Mammary epithelial cell (primary cell): ENCODE measurements at regions of chr15 and their contacts with region 1.

Region 1: DNA sequence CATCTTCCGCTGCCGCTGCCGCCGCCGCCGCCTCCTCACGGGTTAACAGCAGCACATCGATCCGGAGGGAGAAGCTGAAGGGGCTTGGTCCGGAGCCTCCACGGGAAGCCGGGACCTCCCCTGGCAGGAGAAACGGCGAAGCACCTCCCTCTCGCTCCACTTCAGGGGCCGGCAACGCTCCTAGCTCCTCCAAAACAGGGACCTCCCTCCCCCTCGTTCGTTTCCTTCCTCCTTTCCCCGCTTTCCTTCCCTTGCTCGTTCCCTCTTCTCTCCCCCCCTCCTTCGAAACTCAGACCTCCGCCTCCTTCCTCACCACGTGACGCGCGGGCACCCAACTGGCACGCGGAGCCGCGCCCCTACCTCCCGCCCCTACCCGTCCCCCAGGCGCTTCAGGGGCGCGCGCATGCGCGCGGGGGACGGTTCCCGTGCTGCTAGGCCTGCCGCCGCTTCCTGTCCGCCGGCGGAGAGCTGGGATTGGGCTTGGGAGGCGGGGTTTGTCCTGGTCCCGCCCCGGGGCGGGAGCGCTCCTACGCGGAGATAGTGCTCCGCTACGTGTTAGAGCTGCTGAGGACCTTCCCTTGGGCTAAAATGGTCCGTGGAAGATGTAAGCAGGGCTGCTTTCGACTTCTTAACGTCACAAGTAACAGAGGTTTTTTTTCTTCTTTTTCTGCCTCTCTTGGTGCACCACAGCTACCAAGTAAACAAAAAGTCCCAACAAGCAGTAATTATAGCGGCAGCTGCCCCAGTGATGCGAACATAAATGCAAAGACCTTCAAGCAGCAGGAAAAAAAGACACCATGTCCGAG is at the start of gene ADAM10:
- DNase-seq: peak; percentile 100
- H3K4me3 ChIP-seq: peak within 1 kb of the TSS; percentile 77 to 96 (median 90)
- H3K27ac ChIP-seq: peak within 1 kb of the TSS; percentile 89
- H3K4me1 ChIP-seq: peaks cover 10% of the 10 kb centered on the region
- H3K27me3 ChIP-seq: no peaks in the 10 kb centered on the region
- CTCF ChIP-seq: no peak
- total RNA-seq, gene ADAM10: 108 to 163 TPM

Region 2: GRCh38 chr15:58440158-58440910 is 309.4 kb before region 1 on chr15:
- CTCF ChIA-PET with region 1: no interaction called
- dilution Hi-C with region 1: no loop called
- in situ Hi-C with region 1: no loop called
- intact Hi-C with region 1: loop called (anchors 5 kb)
- DNase-seq: peak; percentile 52
- H3K4me3 ChIP-seq: no peak overlapping the region
- H3K27ac ChIP-seq: peak overlapping the region; percentile 93
- H3K4me1 ChIP-seq: peaks cover 36% of the 10 kb centered on the region
- H3K27me3 ChIP-seq: no peaks in the 10 kb centered on the region
- CTCF ChIP-seq: no peak

Region 3: GRCh38 chr15:58684036-58684710 is 65.6 kb before region 1 on chr15:
- CTCF ChIA-PET with region 1: no interaction called
- dilution Hi-C with region 1: no loop called
- in situ Hi-C with region 1: no loop called
- intact Hi-C with region 1: loop called (anchors 5 kb)
- DNase-seq: no peak
- H3K4me3 ChIP-seq: no peak overlapping the region
- H3K27ac ChIP-seq: no peak overlapping the region
- H3K4me1 ChIP-seq: no peaks in the 10 kb centered on the region
- H3K27me3 ChIP-seq: no peaks in the 10 kb centered on the region
- CTCF ChIP-seq: no peak

Region 4: GRCh38 chr15:58734859-58735258 is 14.9 kb before region 1 on chr15:
- CTCF ChIA-PET with region 1: no interaction called
- dilution Hi-C with region 1: no loop called
- in situ Hi-C with region 1: no loop called
- intact Hi-C with region 1: loop called (anchors 2 kb)
- DNase-seq: peak; percentile 57
- H3K4me3 ChIP-seq: no peak overlapping the region
- H3K27ac ChIP-seq: peak overlapping the region; percentile 4
- H3K4me1 ChIP-seq: peaks cover 57% of the 10 kb centered on the region
- H3K27me3 ChIP-seq: no peaks in the 10 kb centered on the region
- CTCF ChIP-seq: no peak

Region 5: GRCh38 chr15:58793862-58794261 is 44.1 kb after region 1 on chr15:
- CTCF ChIA-PET with region 1: no interaction called
- dilution Hi-C with region 1: no loop called
- in situ Hi-C with region 1: no loop called
- intact Hi-C with region 1: loop called (anchors 1 kb)
- DNase-seq: peak; percentile 98
- H3K4me3 ChIP-seq: peak overlapping the region in 2 of 3 experiments; percentile 23 to 31
- H3K27ac ChIP-seq: peak overlapping the region; percentile 99
- H3K4me1 ChIP-seq: peaks cover 16% of the 10 kb centered on the region
- H3K27me3 ChIP-seq: no peaks in the 10 kb centered on the region
- CTCF ChIP-seq: no peak